MCF 10A (cell line): ENCODE measurements at regions of chr1 and their contacts with region 1.

Region 1: DNA sequence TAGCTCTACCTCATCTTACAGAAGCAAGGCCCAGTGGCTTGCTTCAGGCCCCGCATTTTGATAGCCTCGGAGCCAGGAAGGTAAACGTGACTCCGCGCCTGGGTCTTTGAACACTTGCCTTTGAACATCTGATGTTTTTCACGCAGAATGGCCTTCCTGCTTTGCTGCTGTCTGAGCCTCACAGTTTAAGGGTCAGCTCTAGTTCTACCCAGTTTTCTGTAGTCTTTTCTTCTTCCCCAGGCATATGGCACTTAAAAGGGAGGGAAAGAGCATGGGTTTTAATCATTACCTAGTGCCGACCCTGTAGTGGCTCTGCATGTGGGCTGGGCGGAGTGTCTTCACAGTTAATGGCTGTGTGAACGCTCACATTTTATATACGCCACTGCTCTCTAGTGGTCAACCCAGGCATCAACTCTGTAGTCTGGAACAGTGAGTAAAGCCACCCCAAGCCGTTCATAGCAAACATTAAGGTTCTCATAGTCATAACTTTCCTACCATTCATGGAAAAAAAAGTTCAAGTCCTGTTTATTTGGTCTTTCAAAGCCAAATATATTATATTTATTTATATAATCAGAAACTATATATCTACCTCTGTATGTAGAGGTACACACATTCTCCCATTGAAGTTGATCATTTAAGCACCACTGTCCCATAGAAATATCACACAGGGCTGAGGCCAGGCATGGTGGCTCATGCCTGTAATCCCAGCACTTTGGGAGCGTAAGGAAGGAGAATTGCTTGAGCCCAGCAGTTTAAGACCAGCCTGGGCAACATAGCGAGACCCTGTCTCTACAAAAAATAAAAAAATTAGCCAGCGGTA is 78.1 kb downstream of the IER5 start:
- DNase-seq: peak; percentile 90
- H3K4me3 Mint-ChIP-seq: no peak overlapping the region
- H3K27ac Mint-ChIP-seq: no peak overlapping the region
- H3K4me1 Mint-ChIP-seq: no peaks in the 10 kb centered on the region
- H3K27me3 Mint-ChIP-seq: no peaks in the 10 kb centered on the region
- CTCF ChIP-seq: peak; percentile 97

Region 2: GRCh38 chr1:180397175-180397574 is 769.4 kb before region 1 on chr1:
- CTCF ChIA-PET with region 1: no interaction called
- POLR2A ChIA-PET with region 1: no interaction called
- intact Hi-C with region 1: no loop called
- DNase-seq: peak; percentile 15
- H3K4me3 Mint-ChIP-seq: no peak overlapping the region
- H3K27ac Mint-ChIP-seq: no peak overlapping the region
- H3K4me1 Mint-ChIP-seq: no peaks in the 10 kb centered on the region
- H3K27me3 Mint-ChIP-seq: no peaks in the 10 kb centered on the region
- CTCF ChIP-seq: no peak

Region 3: DNA sequence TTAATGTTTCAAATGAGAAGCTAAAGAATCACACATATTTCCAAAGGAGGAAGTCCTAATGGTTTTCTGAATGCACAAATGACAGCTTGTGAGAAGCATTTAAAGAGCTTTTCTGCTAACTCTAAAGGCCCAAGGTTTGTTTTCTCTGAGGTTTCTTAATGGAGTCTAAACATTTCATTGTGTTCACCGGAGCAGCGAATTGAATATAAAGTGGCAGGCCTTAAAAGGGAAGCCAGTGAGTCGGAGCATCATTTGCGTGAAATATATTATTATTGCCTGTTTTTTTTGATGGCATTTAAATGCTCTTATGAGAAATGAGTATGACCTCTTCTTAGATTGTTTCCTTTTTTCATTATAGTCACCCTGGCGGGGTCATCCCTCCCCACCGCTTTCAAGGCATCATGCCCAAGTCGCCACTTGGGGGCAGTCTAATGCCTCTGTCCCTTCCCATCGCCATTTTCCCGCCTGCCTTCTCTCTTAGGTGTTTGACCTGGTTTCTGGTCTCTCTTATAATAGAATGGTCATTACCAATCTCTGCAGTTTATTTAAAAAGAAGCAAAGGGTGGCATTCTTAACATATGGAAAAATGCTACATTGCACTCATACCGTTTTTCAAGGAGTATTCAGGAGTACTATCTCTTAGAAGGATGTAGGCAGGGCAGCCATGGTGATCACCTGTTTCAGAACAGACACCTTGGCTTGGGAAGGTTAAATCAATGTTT is 633.2 kb before region 1 on chr1:
- CTCF ChIA-PET with region 1: no interaction called
- POLR2A ChIA-PET with region 1: no interaction called
- intact Hi-C with region 1: loop called (anchors 5 kb)
- DNase-seq: peak; percentile 88
- H3K4me3 Mint-ChIP-seq: no peak overlapping the region
- H3K27ac Mint-ChIP-seq: no peak overlapping the region
- H3K4me1 Mint-ChIP-seq: peaks cover 43% of the 10 kb centered on the region
- H3K27me3 Mint-ChIP-seq: no peaks in the 10 kb centered on the region
- CTCF ChIP-seq: peak; percentile 90

Region 4: DNA sequence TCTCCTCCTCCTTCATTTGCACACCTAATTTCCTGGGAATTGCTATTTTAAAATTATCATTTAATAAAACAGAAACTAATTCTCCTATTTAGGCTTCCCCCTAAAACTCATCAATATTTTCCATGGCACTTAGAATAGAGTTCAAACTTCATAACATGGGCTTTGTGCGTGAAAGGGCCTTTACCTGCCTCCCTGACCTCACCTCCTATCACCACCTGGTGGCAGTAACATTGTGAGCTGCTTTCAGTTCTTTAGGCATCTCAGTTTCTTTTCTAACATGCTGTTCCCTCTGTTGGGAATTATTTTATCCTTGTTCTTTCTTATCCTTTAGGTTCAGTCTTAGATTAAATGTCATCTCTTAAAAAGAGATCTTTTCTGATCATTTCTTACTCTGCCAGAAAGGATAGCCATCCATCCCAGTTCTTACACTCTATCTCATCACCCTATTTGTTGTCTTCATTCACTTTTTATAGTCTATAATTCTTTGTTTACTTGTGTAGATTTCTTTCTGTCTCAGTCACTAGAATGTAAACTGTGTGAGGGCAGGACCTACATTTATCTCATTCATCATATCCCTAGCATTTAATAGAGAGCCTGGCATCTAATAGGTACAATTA is 387.7 kb before region 1 on chr1:
- CTCF ChIA-PET with region 1: no interaction called
- POLR2A ChIA-PET with region 1: no interaction called
- intact Hi-C with region 1: loop called (anchors 5 kb)
- DNase-seq: peak; percentile 59
- H3K4me3 Mint-ChIP-seq: no peak overlapping the region
- H3K27ac Mint-ChIP-seq: no peak overlapping the region
- H3K4me1 Mint-ChIP-seq: peaks cover 9% of the 10 kb centered on the region
- H3K27me3 Mint-ChIP-seq: no peaks in the 10 kb centered on the region
- CTCF ChIP-seq: peak; percentile 57

Region 5: GRCh38 chr1:181152892-181153633 is 13.5 kb before region 1 on chr1:
- CTCF ChIA-PET with region 1: interaction called, 162 read pairs
- POLR2A ChIA-PET with region 1: interaction called, 6 read pairs
- intact Hi-C with region 1: no loop called
- DNase-seq: peak; percentile 28
- H3K4me3 Mint-ChIP-seq: no peak overlapping the region
- H3K27ac Mint-ChIP-seq: no peak overlapping the region
- H3K4me1 Mint-ChIP-seq: peaks cover 33% of the 10 kb centered on the region
- H3K27me3 Mint-ChIP-seq: no peaks in the 10 kb centered on the region
- CTCF ChIP-seq: no peak

Region 6: GRCh38 chr1:181179987-181180365 is 13.4 kb after region 1 on chr1:
- CTCF ChIA-PET with region 1: interaction called, 16 read pairs
- POLR2A ChIA-PET with region 1: interaction called, 4 read pairs
- intact Hi-C with region 1: no loop called
- DNase-seq: peak; percentile 45
- H3K4me3 Mint-ChIP-seq: no peak overlapping the region
- H3K27ac Mint-ChIP-seq: no peak overlapping the region
- H3K4me1 Mint-ChIP-seq: peaks cover 9% of the 10 kb centered on the region
- H3K27me3 Mint-ChIP-seq: peaks cover 24% of the 10 kb centered on the region
- CTCF ChIP-seq: no peak

Region 7: DNA sequence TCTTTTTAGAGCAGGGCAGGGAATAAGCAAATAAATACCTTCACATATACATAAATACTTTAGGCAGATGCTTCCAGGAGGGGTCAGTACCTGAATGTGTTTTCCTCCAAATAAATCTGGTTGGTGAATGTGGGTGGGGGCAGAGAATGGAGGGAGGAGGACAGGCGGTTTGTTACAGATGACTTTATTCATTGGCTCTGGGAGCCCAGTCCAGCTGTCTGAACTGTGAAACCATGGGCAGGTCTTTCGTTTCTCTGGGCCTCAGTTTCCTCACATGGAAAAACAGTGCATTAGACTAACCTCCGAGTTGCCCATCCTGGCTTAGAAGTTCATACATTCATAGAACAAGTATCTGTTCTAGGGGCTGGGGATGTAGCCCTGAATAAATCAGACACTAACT is 46.5 kb after region 1 on chr1:
- CTCF ChIA-PET with region 1: no interaction called
- POLR2A ChIA-PET with region 1: no interaction called
- intact Hi-C with region 1: no loop called
- DNase-seq: no peak
- H3K4me3 Mint-ChIP-seq: no peak overlapping the region
- H3K27ac Mint-ChIP-seq: no peak overlapping the region
- H3K4me1 Mint-ChIP-seq: peaks cover 5% of the 10 kb centered on the region
- H3K27me3 Mint-ChIP-seq: no peaks in the 10 kb centered on the region
- CTCF ChIP-seq: no peak

Region 8: DNA sequence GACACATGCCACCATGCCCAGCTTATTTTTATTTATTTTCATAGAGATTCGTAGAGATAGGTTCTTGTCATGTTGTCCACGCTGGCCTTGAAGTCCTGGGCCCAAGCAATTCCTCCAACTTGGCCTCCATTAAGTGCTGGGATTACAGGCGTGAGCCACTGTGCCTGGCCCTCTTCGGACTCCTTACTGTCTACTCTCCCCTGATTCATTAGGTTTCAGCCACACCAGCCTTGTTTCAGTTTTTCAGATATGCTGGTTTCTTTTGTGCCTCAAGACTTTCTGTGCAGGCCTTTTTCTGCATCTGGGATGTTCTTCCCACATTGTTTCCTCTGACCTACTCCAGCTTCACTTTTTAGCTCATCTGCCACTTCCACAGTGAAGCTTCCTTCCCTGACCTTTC is 402.1 kb after region 1 on chr1:
- CTCF ChIA-PET with region 1: no interaction called
- POLR2A ChIA-PET with region 1: no interaction called
- intact Hi-C with region 1: no loop called
- DNase-seq: no peak
- H3K4me3 Mint-ChIP-seq: no peak overlapping the region
- H3K27ac Mint-ChIP-seq: no peak overlapping the region
- H3K4me1 Mint-ChIP-seq: no peaks in the 10 kb centered on the region
- H3K27me3 Mint-ChIP-seq: no peaks in the 10 kb centered on the region
- CTCF ChIP-seq: no peak